ENCODE measurements at regions of chr20 and their contacts with region 1.

Region 1: GRCh38 chr20:58907399-58908137 is 55.1 kb downstream of the GNAS start:
- DNase-seq: peak; percentile 97
- H3K4me3 ChIP-seq: peak overlapping the region in 2 of 4 donors; percentile 19 to 24
- H3K27ac ChIP-seq: peak overlapping the region; percentile 72 to 82 (median 79)
- H3K4me1 ChIP-seq: peaks cover 0 to 48% (median 36%) of the 10 kb centered on the region in 4 donors
- H3K27me3 ChIP-seq: no peaks in the 10 kb centered on the region
- CTCF ChIP-seq: no peak
- EP300 ChIP-seq: peak in 2 of 4 donors; percentile 60 to 78
- POLR2A ChIP-seq: no peak

Region 2: DNA sequence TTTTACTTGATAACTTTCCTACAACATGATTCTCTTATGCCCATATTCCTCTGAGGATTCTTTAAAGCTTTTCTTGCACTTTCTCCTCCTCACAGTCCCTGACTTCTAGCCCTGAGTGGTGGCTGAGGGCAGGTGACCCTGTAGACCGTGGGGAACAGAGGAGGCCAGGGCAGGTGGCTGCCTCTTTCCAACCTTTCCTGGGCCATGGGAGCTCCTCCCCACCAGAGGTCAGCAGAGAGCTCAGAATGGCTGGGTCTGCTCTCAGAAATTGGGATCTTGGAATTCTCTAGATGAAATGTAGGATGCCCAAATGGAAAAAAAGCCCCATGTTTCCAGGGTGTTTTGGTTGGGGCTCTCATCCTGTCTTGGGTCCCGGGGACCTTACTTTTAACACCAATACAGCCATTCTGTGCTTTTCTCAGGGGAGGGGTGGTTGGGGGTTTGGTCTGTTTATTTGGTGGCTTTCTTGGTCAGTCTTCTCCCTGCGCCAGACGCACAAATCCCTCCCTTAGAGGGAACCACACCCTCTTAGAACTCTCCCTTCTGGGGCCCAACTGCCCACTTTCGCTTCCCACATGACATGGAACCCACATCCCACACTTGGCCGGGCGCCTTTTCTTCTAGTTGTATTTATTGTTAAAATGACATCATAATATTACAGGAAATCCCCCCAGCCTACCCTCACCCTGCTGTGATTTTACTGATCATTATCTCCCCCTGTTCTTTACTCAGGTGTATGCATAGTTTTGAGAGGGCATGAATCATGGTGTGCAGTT is 37.1 kb before region 1 on chr20:
- intact Hi-C with region 1: no loop called
- DNase-seq: peak; percentile 84
- H3K4me3 ChIP-seq: no peak overlapping the region
- H3K27ac ChIP-seq: no peak overlapping the region
- H3K4me1 ChIP-seq: no peaks in the 10 kb centered on the region
- H3K27me3 ChIP-seq: no peaks in the 10 kb centered on the region
- CTCF ChIP-seq: peak; percentile 71 to 88 (median 83)
- EP300 ChIP-seq: no peak
- POLR2A ChIP-seq: no peak

Region 3: DNA sequence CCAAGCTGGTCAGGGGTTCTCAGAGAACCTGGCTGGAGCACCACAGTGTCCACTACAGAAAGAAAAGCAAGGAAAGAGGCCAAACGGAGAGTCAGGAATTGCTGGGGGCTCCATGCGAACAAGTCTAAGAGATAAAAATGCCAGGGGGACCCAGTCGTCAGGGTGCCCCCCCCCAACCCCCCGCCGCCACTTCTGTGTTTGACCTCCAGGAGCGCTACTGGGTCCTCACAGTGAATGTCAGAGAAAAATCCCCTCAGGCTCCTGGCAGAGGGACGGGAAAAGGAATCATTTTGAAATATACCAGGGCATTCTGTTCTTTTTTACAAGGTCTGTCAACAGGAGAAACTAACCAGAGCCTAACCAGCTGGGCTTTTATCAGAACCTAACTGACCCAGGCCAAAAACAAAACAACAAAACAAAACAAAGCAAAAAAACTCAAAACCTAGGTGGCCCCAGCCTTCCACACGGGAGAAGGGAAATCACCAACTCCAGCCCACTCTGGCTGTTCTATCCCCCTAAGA is 55.6 kb after region 1 on chr20:
- intact Hi-C with region 1: loop called (anchors 5 kb)
- DNase-seq: no peak
- H3K4me3 ChIP-seq: peak overlapping the region in 1 of 4 donors; percentile 10
- H3K27ac ChIP-seq: peak overlapping the region in 3 of 4 donors; percentile 66 to 75 (median 67)
- H3K4me1 ChIP-seq: peaks cover 0 to 18% (median 4%) of the 10 kb centered on the region in 4 donors
- H3K27me3 ChIP-seq: no peaks in the 10 kb centered on the region
- CTCF ChIP-seq: peak in 2 of 4 experiments; percentile 13 to 37
- EP300 ChIP-seq: peak; percentile 25 to 85 (median 41)
- POLR2A ChIP-seq: no peak